ENCODE measurements at regions of chr1 and their contacts with region 1.

Region 1: DNA sequence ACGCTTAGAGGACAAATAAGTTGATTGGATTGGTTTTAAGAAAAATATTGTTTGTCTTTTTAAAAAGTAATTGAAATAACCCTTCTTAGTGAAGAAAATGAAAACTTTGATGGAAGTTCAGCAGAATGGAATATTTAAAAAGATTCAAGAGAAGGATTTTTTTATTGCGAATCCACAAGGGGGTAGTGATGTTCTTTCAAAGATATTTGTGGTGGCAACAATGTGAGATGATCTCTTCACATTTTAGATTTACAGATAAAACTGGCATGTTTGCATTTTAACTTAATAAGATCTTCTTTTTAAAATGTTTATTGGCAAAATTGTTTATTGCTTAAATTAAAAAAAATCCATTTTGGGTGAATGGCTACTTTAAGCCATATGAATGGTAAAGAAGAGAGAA is 8.9 kb downstream of the CAMTA1 start:
- DNase-seq: no peak
- H3K4me3 ChIP-seq: no peak overlapping the region
- H3K27ac ChIP-seq: no peak overlapping the region
- H3K4me1 ChIP-seq: no peaks in the 10 kb centered on the region
- H3K27me3 ChIP-seq: no peaks in the 10 kb centered on the region
- CTCF ChIP-seq: peak in 2 of 3 donors; percentile 22 to 44
- EP300 ChIP-seq: no peak
- POLR2A ChIP-seq: no peak

Region 2: GRCh38 chr1:6544831-6545230 is 249.3 kb before region 1 on chr1:
- intact Hi-C with region 1: no loop called
- DNase-seq: no peak
- H3K4me3 ChIP-seq: no peak overlapping the region
- H3K27ac ChIP-seq: no peak overlapping the region
- H3K4me1 ChIP-seq: no peaks in the 10 kb centered on the region
- H3K27me3 ChIP-seq: no peaks in the 10 kb centered on the region
- CTCF ChIP-seq: no peak
- EP300 ChIP-seq: no peak
- POLR2A ChIP-seq: no peak

Region 3: DNA sequence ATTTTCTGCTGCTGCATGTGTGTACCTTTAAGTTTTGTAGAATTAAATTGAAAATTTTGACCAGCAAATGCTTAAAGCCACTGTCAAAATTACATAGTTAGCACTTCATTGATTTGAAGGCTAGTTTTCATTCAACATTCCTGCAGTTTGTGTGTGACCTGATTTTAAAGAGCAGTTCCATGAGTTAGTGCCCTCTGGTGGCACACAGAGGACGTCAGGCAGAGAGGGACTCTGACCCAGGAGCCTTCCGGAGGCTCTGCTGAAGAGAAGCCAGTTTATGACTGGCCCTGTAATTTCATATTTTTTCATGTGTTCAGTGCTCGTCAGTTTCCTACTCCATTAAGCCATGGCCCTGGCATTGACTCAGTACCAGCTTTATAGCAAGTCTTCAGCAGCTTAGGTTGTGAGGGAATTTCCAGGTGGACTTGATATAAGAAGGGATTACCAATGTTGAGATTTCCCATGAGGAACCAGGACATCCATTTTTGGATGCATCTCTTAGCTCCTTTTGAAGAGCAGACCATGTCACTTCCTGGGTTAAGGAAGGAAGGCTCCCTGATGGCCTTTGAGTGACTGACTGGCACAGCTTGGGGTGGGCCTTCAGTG is 95.8 kb after region 1 on chr1:
- intact Hi-C with region 1: loop called in 1 of 4 experiments (anchors 10 kb)
- DNase-seq: peak in 4 of 5 donors; percentile 39 to 58 (median 54)
- H3K4me3 ChIP-seq: no peak overlapping the region
- H3K27ac ChIP-seq: no peak overlapping the region
- H3K4me1 ChIP-seq: no peaks in the 10 kb centered on the region
- H3K27me3 ChIP-seq: no peaks in the 10 kb centered on the region
- CTCF ChIP-seq: peak; percentile 19 to 48 (median 22)
- EP300 ChIP-seq: no peak
- POLR2A ChIP-seq: no peak

Region 4: DNA sequence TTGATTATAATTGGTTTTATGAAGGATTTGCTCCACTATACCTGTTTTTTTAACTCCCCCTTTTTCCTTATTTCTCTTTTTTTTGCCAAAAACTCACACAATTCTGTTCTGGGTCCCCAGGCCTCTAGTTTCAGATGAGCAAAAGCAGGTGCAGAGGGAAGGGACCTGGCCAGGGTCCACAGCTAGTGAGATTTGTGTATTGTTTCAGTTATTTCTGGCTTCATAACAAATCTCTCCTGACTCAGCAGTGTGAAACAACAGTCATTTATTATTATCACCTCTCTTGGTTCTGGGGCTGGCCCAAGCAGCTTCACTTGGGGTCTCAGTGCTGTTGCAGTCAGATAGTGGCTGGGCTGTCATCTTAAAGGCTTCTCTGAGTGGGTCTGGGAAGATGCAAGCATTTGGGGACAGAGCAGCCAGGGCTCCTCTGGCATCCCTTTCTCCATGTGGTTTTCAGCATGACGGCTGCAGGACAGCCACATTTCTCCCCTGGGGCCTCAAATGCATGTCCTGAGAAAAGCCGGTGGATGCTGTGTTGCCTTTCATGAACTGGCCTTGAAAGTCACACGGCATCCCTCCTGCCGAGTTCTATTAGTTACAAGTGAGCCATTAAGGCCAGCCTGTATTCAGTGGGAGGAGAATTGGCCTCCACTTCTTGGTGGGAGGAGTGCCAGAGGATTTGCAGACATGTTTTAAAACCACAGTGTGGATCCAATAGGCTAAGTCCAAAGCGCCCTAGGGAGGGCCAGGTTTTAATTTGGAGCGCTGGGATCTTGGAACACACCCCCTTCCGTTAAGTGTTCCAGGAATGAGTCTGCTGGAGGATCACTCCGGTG is 128.2 kb after region 1 on chr1:
- intact Hi-C with region 1: no loop called
- DNase-seq: peak; percentile 59 to 75 (median 67)
- H3K4me3 ChIP-seq: no peak overlapping the region
- H3K27ac ChIP-seq: no peak overlapping the region
- H3K4me1 ChIP-seq: peaks cover 5% of the 10 kb centered on the region
- H3K27me3 ChIP-seq: no peaks in the 10 kb centered on the region
- CTCF ChIP-seq: no peak
- EP300 ChIP-seq: no peak
- POLR2A ChIP-seq: no peak

Region 5: GRCh38 chr1:7070389-7071029 is 276.3 kb after region 1 on chr1:
- intact Hi-C with region 1: loop called in 2 of 4 experiments (anchors 5 kb)
- DNase-seq: peak; percentile 64 to 72 (median 70)
- H3K4me3 ChIP-seq: peak overlapping the region; percentile 9
- H3K27ac ChIP-seq: no peak overlapping the region
- H3K4me1 ChIP-seq: no peaks in the 10 kb centered on the region
- H3K27me3 ChIP-seq: no peaks in the 10 kb centered on the region
- CTCF ChIP-seq: peak; percentile 51 to 68 (median 64)
- EP300 ChIP-seq: no peak
- POLR2A ChIP-seq: no peak

Region 6: DNA sequence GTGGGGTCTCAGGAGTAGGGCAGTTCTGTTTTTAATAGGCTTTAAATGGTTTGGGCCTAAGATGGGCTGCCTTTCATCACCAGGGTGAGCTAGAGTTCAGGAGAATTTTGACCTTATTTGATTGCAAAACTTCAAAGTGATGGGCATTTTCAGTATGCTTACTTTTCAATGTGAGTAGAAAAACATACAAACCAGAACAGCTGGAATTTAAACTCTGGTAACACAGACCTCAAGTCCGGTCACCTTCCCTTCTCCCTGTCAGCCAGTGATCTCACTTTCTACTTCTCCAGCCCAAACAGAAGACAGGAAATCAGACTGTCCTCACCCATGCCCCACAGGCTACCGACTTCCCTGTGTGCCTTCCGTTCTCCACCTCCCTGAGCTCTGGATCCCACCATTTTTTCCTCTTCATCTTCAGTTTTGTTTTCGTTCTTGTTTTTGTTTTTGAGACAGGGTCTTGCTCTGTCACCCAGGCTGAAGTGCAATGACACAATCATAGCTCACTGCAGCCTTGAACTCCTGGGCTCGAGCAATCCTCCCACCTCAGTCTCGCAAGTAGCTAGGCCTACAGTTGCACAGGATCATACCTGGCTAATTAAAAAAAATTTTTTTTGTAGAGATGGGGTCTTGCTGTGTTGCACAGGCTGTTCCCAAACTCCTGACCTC is 365.1 kb after region 1 on chr1:
- intact Hi-C with region 1: no loop called
- DNase-seq: no peak
- H3K4me3 ChIP-seq: no peak overlapping the region
- H3K27ac ChIP-seq: no peak overlapping the region
- H3K4me1 ChIP-seq: no peaks in the 10 kb centered on the region
- H3K27me3 ChIP-seq: no peaks in the 10 kb centered on the region
- CTCF ChIP-seq: no peak
- EP300 ChIP-seq: no peak
- POLR2A ChIP-seq: no peak